Activated B cell treated with CpG ODN at 0.5 μM for 24 hours (primary cell): ENCODE measurements at regions of chr3 and their contacts with region 1.

Region 1: GRCh38 chr3:122564155-122564912 is at the starts of genes DTX3L and PARP9:
- DNase-seq: peak; percentile 67
- ATAC-seq: peak; percentile 83
- H3K4me3 Mint-ChIP-seq: peak within 1 kb of the TSS; percentile 93
- H3K27ac Mint-ChIP-seq: peak within 1 kb of the TSS; percentile 96
- H3K4me1 Mint-ChIP-seq: peaks cover 82% of the 10 kb centered on the region
- H3K27me3 Mint-ChIP-seq: no peaks in the 10 kb centered on the region
- CTCF ChIP-seq: no peak
- total RNA-seq, gene DTX3L: 73.8 and 76.5 TPM in 2 replicates
- total RNA-seq, gene PARP9: 45.9 and 50.8 TPM in 2 replicates

Region 2: GRCh38 chr3:122609798-122610559 is 45.6 kb after region 1 on chr3:
- CTCF ChIA-PET with region 1: no interaction called
- POLR2A ChIA-PET with region 1: interaction called, 9 read pairs
- intact Hi-C with region 1: loop called (anchors 1 kb)
- DNase-seq: no peak
- ATAC-seq: peak; percentile 88
- H3K4me3 Mint-ChIP-seq: peak overlapping the region; percentile 37
- H3K27ac Mint-ChIP-seq: peak overlapping the region; percentile 80
- H3K4me1 Mint-ChIP-seq: peaks cover 41% of the 10 kb centered on the region
- H3K27me3 Mint-ChIP-seq: no peaks in the 10 kb centered on the region
- CTCF ChIP-seq: no peak

Region 3: GRCh38 chr3:122697952-122698620 is 133.8 kb after region 1 on chr3:
- CTCF ChIA-PET with region 1: interaction called, 4 read pairs
- POLR2A ChIA-PET with region 1: interaction called, 13 read pairs
- intact Hi-C with region 1: loop called (anchors 1 kb)
- DNase-seq: peak; percentile 48
- ATAC-seq: peak; percentile 95
- H3K4me3 Mint-ChIP-seq: peak overlapping the region; percentile 52
- H3K27ac Mint-ChIP-seq: peak overlapping the region; percentile 92
- H3K4me1 Mint-ChIP-seq: peaks cover 94% of the 10 kb centered on the region
- H3K27me3 Mint-ChIP-seq: no peaks in the 10 kb centered on the region
- CTCF ChIP-seq: no peak

Region 4: DNA sequence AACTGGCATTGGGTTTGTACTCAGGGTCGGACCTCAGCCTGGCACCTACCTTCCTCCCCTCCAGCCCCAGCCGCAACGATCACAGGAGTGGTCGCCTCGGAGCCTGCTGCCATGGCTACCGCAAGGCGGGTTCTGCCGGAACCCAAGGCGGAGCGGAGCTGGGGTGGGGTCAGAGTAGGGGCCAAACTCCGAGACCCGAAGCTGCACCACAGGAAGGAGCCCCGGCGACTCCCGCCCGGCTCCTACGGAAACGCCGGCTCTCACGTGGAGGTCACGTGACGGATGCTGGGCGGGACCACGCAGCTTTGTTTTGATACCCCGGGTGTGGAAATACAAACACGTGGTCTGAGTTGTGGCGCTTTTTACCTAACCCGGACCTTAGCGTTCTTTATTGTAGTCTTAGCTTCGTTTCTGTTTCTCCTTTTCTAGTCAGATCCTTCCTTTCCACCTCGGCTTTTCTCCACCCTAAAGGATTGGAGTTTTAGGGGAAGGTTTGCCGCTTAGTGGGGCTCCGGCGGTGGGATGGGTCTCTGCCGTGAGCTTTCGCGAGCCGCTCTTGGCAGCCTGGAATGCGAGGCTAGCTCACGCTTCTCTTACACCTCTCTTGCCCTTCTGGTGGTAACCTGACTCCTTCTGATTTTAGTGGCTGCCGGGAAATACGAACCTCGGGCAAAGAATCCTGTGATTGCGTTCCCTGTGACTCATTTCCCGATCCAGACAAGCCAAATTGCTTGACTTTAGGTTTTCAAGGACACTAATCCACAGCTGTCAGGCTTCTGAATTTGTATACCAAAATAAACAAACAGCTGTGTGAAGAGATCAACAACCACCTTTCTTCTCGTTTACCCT is 229.5 kb after region 1 on chr3 and contains the start of gene HSPBAP1:
- CTCF ChIA-PET with region 1: no interaction called
- POLR2A ChIA-PET with region 1: no interaction called
- intact Hi-C with region 1: loop called (anchors 2 kb)
- DNase-seq: peak; percentile 91
- ATAC-seq: peak; percentile 67
- H3K4me3 Mint-ChIP-seq: no peak within 1 kb of the TSS
- H3K27ac Mint-ChIP-seq: peak within 1 kb of the TSS; percentile 86
- H3K4me1 Mint-ChIP-seq: peaks cover 30% of the 10 kb centered on the region
- H3K27me3 Mint-ChIP-seq: no peaks in the 10 kb centered on the region
- CTCF ChIP-seq: no peak
- total RNA-seq, gene HSPBAP1: 18.1 and 20.6 TPM in 2 replicates

Region 5: DNA sequence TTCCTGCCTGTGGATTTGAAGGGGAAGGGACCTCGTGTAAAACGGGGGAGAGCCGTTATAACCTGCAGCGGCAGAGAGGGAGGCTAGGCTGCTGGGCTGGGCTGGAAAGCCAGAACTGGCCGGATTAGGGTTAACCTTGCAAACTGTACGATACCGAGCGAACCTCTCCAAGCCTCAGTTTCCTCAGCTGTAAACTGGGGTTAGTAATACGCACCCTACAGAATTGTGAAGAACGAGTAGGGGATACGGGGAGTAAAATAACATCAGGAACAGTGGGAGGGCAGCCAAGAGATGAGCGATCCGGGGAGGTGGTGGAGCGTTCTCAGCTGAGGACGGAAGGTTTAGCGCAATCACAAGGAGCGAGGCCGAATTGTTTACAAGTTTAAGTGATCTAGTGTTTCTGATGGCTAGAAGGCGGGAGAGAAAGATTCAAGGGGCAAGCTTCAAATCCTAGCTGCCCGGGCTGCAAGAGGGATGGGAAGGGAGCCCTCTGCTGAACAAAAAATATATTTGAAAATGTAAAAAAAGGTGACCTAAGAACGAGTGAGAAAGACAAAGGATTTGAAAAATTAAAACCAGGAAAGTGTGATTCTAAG is 464.0 kb after region 1 on chr3:
- CTCF ChIA-PET with region 1: interaction called, 3 read pairs
- POLR2A ChIA-PET with region 1: no interaction called
- intact Hi-C with region 1: loop called (anchors 1 kb)
- DNase-seq: peak; percentile 19
- ATAC-seq: peak; percentile 50
- H3K4me3 Mint-ChIP-seq: peak overlapping the region; percentile 83
- H3K27ac Mint-ChIP-seq: no peak overlapping the region
- H3K4me1 Mint-ChIP-seq: peaks cover 19% of the 10 kb centered on the region
- H3K27me3 Mint-ChIP-seq: peaks cover 37% of the 10 kb centered on the region
- CTCF ChIP-seq: no peak